ENCODE measurements at regions of chr7 and their contacts with region 1.

Region 1: DNA sequence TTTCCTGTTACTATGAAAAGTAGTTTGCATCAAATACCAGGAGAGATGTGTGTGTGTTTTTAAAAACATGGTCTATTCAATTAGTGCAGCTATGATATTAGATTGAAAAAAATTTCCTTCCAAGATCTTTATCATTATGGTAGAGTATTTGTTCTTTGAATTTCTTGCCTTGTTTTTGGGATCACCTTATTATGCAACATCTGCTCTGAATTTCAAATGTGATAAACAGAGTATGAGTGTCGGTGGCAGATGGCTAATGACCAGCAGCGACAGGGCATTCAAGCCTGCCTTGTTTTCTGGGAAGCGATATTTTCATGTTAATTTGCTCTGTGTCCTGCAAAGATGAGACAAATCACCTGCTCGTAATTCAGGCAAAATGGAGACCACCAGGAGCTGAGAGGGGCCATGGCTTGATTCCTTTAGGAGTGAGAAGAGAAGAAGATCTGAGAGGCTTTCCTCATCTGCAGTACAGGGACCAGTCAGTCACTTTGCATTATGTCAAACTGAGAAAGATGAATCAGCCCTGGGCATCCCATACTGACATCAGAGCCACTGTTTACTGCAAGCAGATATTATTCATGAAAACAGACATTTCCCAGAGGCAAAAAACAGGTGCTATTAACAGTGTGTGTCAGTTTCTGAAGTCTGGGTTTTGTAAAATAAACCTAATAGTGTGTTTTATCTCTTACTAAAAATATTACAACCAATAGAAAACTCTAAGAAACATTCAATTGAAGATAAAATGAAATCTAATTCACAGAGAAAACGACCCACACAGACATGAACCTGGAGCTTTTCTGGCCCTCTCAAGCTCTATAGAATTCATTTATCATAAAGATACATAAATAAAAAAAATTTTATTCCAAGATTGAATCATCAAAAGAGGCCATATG is 67.6 kb downstream of the CDK6 start:
- DNase-seq: peak; percentile 66
- H3K4me3 Mint-ChIP-seq: peak overlapping the region; percentile 63
- H3K27ac Mint-ChIP-seq: peak overlapping the region; percentile 94
- H3K4me1 Mint-ChIP-seq: peaks cover 59% of the 10 kb centered on the region
- H3K27me3 Mint-ChIP-seq: no peaks in the 10 kb centered on the region

Region 2: DNA sequence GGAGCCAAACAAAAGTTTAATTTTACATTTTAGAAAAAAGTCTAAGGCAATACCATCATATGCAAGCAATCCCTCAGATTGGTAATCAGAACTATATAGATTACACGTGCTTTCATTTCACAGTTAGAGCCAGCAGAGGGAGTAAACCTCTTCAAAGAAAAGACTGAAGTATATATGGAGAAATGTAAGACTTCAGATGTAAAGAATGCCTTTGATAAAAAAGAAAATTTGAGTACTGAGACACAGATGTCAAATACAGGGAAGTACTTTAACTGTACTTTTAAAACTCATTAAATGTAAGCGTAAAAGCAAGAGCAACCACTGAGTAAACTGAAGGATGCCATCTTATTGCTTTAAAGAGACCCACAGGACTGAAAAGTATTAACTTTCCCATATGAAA is 77.2 kb before region 1 on chr7:
- intact Hi-C with region 1: loop called (anchors 5 kb)
- DNase-seq: peak; percentile 83
- H3K4me3 Mint-ChIP-seq: peak overlapping the region; percentile 56
- H3K27ac Mint-ChIP-seq: peak overlapping the region; percentile 87
- H3K4me1 Mint-ChIP-seq: peaks cover 68% of the 10 kb centered on the region
- H3K27me3 Mint-ChIP-seq: no peaks in the 10 kb centered on the region

Region 3: GRCh38 chr7:92708111-92709042 is 60.4 kb before region 1 on chr7:
- intact Hi-C with region 1: loop called (anchors 1 kb)
- DNase-seq: no peak
- H3K4me3 Mint-ChIP-seq: no peak overlapping the region
- H3K27ac Mint-ChIP-seq: peak overlapping the region; percentile 79
- H3K4me1 Mint-ChIP-seq: peaks cover 34% of the 10 kb centered on the region
- H3K27me3 Mint-ChIP-seq: no peaks in the 10 kb centered on the region

Region 4: DNA sequence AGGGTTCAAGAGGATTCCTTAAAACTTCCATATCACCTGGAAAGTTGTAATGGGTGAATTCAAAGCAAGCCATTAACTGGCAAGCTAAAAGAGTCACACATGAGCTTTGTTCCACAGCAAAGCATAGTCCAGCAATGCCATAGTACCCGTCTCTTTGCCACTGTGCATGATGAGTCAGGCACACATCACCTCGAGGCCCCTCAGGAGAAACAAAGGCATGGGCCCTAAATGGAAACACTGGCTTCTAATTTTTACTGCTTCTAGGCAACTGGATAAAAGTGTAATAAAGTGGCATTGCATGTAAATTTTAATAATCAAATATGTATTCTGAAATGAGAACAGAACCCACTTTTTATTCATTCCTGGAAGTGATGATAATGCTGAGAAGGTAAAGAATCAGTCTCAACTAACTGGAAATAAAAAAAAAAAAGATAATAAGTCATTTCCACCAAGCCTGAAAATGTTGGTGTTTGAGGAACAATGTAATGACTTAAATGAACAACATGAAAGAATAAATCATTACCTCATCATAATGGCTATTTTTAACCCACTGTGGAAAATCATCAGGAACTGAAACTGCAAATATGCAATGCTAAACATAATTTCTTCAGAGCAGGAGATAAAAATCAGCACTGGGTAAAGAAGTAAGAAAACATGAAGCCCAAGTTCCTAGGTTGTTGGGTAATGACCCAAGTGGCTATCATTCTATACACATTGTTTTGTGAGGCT is 37.2 kb before region 1 on chr7:
- intact Hi-C with region 1: loop called (anchors 1 kb)
- DNase-seq: no peak
- H3K4me3 Mint-ChIP-seq: peak overlapping the region; percentile 64
- H3K27ac Mint-ChIP-seq: peak overlapping the region; percentile 95
- H3K4me1 Mint-ChIP-seq: peaks cover 54% of the 10 kb centered on the region
- H3K27me3 Mint-ChIP-seq: no peaks in the 10 kb centered on the region

Region 5: DNA sequence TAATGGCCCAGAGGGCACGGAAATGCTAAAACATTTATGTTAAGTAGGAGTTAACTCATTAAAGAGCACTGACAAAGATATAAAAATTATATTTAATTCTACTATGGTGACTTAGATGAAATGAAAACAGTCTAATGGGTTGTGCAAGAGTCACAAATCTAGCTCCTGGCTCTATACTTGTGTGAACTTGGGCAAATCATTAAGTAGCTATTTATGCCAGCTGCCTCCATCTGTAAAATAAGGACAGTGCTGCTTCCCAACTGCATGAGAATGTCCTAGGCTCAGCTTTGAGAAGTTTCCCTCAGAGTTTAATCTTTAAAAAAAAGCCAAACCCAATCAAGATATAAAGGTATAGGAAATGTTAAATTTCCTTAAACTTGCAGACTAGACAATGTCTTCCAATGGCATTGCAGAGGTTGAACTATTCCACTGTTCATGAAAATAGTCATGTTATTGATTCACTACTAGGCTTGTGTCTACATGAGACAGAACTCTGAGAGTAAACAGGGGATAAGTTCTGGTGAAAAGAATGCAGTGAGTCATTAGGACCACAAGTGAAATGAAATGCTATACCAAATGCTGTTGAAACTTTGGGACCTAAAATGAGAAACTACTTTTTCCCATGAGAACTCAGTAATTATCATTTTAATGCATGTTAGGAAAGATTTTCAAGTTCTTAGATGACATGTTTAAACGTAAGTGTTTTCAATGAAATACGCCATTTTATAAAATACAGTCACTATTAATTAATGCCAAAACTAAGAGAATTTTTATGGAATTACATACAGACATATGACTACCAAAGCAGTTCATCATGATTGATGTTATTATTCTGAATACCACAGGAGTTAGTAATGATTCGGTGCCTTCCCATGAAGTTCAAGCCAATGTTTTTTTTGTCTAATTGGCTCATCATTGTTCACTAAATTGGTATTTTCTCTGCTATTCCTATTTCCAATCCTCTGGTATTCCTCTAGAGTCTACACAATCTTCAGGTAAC is 16.5 kb before region 1 on chr7:
- intact Hi-C with region 1: loop called (anchors 1 kb)
- DNase-seq: no peak
- H3K4me3 Mint-ChIP-seq: no peak overlapping the region
- H3K27ac Mint-ChIP-seq: peak overlapping the region; percentile 83
- H3K4me1 Mint-ChIP-seq: peaks cover 64% of the 10 kb centered on the region
- H3K27me3 Mint-ChIP-seq: no peaks in the 10 kb centered on the region

Region 6: GRCh38 chr7:92783260-92784201 is 14.8 kb after region 1 on chr7:
- intact Hi-C with region 1: loop called (anchors 2 kb)
- DNase-seq: no peak
- H3K4me3 Mint-ChIP-seq: no peak overlapping the region
- H3K27ac Mint-ChIP-seq: no peak overlapping the region
- H3K4me1 Mint-ChIP-seq: peaks cover 55% of the 10 kb centered on the region
- H3K27me3 Mint-ChIP-seq: no peaks in the 10 kb centered on the region